ENCODE measurements at regions of chr11 and their contacts with region 1.

Region 1: DNA sequence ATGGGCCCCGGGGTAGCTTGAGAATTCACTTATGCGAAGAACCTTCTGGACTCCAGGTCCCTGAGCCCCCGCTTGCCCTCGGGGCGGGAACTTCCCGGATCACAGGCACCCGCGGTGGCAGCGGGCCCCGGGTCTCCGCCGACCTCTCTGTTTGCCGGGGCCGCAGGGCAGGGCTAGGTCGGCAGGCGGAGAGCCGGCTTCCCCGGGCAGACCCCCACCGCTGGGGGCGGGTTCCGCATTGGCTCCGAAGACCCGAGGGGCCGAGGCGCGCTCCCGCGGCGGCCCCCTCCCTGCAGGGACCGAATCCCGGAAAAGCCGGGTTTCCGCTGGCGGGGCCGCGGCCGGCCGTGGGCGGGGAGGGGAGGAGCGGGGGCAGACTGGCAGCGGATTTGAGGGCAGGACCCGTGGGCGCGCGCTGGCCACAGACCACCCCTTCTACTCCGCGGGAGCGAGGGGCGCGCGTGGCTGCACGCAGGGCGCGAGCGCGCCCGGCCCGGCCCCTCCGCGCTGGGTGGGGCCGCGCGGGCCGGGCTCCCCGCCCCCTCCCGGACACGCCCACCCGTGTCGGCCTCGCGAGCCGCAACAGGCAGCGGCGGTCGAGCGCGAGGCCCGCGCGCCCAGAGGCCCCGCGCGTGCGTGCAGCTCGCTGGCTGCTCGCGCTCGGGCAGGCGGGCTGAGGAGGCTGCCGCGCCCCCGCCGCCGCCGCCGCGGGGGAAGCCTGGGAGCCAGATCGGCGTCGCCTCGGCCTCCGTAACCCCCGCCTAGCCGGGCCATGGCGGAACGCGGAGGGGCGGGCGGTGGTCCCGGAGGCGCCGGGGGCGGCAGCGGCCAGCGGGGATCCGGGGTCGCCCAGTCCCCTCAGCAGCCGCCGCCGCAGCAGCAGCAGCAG is at the start of gene PACS1:
- DNase-seq: peak; percentile 54 to 92 (median 73)
- ATAC-seq: peak; percentile 67
- H3K4me3 ChIP-seq: peak within 1 kb of the TSS; percentile 87
- H3K4me3 Mint-ChIP-seq: peak within 1 kb of the TSS; percentile 96
- H3K27ac ChIP-seq: peak within 1 kb of the TSS; percentile 81 to 85
- H3K27ac Mint-ChIP-seq: peak within 1 kb of the TSS; percentile 94
- H3K4me1 ChIP-seq: peaks cover 41% of the 10 kb centered on the region
- H3K4me1 Mint-ChIP-seq: peaks cover 73% of the 10 kb centered on the region
- H3K27me3 ChIP-seq: no peaks in the 10 kb centered on the region
- H3K27me3 Mint-ChIP-seq: no peaks in the 10 kb centered on the region
- CTCF ChIP-seq: no peak
- total RNA-seq, gene PACS1: 179 to 183 TPM

Region 2: DNA sequence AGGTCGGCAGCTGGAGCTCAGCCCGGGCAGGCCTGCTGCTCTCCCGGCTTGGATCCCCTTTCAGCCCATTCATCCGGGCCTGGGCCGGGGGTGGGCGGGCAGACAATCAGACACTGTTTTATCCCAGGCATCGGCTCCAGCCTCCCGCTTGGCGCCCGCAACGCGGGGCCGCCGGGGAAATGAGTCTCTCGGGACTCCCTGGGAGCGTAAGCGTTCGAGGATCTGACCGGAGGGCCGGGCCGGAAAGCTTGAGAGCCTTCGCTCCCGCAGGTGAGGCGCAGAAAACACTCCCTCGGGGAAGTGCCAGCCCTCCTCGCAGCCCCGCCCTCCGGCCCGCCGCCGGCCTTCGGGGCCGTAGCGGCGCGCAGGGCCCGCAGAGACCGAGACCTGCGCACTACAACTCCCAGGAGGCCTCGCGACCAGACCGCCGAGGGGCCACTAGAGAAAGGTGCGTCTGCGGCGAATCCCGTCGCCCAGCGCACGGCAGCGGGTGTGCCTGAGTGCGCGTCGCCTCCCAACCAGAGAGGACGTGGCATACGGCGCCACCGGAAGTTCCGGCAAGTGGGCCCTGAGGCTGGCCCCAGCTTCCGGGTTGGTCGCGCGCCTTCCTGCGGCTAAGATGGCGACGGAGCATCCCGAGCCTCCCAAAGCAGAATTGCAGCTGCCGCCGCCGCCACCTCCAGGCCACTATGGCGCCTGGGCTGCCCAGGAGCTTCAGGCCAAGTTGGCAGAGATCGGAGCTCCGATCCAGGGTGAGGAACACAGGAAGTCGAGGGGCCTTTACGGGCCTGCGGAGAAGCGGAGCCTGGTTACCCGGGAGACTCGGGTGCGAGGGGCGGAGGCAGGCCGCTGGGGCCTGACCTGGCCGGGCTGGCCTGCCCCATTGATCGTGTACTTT is 17.9 kb before region 1 on chr11 and contains the start of gene SF3B2:
- CTCF ChIA-PET with region 1: interaction called, 8 read pairs
- POLR2A ChIA-PET with region 1: interaction called, 19 read pairs
- intact Hi-C with region 1: loop called (anchors 1 to 2 kb)
- DNase-seq: peak; percentile 88 to 99 (median 94)
- ATAC-seq: peak; percentile 95
- H3K4me3 ChIP-seq: peak within 1 kb of the TSS; percentile 100
- H3K4me3 Mint-ChIP-seq: peak within 1 kb of the TSS; percentile 100
- H3K27ac ChIP-seq: peak within 1 kb of the TSS; percentile 66 to 90
- H3K27ac Mint-ChIP-seq: peak within 1 kb of the TSS; percentile 97
- H3K4me1 ChIP-seq: peaks cover 43% of the 10 kb centered on the region
- H3K4me1 Mint-ChIP-seq: peaks cover 37% of the 10 kb centered on the region
- H3K27me3 ChIP-seq: no peaks in the 10 kb centered on the region
- H3K27me3 Mint-ChIP-seq: peaks cover 5% of the 10 kb centered on the region
- CTCF ChIP-seq: no peak
- total RNA-seq, gene SF3B2: 182 to 196 TPM

Region 3: DNA sequence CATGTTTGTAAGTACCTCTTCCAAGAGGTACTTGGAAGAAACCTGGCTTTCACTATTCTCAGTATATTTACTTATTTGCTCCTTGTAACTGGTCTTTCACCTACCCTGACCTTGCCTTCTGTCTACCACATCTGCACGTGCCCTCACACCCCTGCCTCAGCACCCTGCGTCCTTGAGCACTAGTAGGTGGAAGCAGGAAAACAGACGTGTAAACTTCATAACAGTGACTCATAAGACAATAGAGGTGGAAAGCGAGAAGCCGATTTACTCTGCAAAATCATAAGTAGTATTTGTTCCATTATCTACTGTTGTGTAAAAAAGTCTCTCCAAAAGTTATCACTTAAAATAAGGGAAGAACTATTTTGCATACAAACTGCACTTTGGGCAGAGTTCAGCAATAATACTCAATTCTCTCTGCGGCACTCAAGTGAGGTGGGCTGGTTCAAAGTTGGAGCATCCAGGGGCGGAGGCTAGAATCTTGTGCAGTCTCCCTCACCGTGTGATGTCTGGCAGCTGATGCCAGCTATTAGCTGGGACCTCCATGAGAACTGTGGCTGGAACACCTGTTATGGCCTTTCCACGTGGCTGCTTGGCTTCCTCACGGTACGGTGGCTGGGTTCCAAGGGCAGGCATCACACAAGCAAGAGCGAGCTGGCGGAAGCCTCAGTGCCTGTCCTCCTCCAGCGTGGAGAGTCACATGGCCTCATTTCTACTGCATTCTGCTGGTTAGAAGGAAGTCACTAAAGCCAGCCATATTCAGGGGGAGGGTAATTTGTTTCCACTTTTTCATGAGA is 30.5 kb after region 1 on chr11:
- CTCF ChIA-PET with region 1: interaction called, 13 read pairs
- POLR2A ChIA-PET with region 1: interaction called, 24 read pairs
- intact Hi-C with region 1: loop called (anchors 2 to 5 kb)
- DNase-seq: peak; percentile 45 to 88 (median 66)
- ATAC-seq: peak; percentile 95
- H3K4me3 ChIP-seq: peak overlapping the region; percentile 42
- H3K4me3 Mint-ChIP-seq: peak overlapping the region; percentile 84
- H3K27ac ChIP-seq: peak overlapping the region; percentile 78 to 79
- H3K27ac Mint-ChIP-seq: peak overlapping the region; percentile 89
- H3K4me1 ChIP-seq: peaks cover 69% of the 10 kb centered on the region
- H3K4me1 Mint-ChIP-seq: peaks cover 69% of the 10 kb centered on the region
- H3K27me3 ChIP-seq: no peaks in the 10 kb centered on the region
- H3K27me3 Mint-ChIP-seq: no peaks in the 10 kb centered on the region
- CTCF ChIP-seq: no peak

Region 4: GRCh38 chr11:66119348-66120133 is 49.6 kb after region 1 on chr11:
- CTCF ChIA-PET with region 1: interaction called, 16 read pairs
- POLR2A ChIA-PET with region 1: interaction called, 76 read pairs
- intact Hi-C with region 1: loop called (anchors 2 to 5 kb)
- DNase-seq: no peak
- ATAC-seq: peak; percentile 15
- H3K4me3 ChIP-seq: no peak overlapping the region
- H3K4me3 Mint-ChIP-seq: peak overlapping the region; percentile 62
- H3K27ac ChIP-seq: peak overlapping the region; percentile 16 to 41
- H3K27ac Mint-ChIP-seq: peak overlapping the region; percentile 83
- H3K4me1 ChIP-seq: peaks cover 67% of the 10 kb centered on the region
- H3K4me1 Mint-ChIP-seq: peaks cover 94% of the 10 kb centered on the region
- H3K27me3 ChIP-seq: no peaks in the 10 kb centered on the region
- H3K27me3 Mint-ChIP-seq: no peaks in the 10 kb centered on the region
- CTCF ChIP-seq: no peak

Region 5: GRCh38 chr11:66136752-66137123 is 66.8 kb after region 1 on chr11:
- CTCF ChIA-PET with region 1: interaction called, 28 read pairs
- POLR2A ChIA-PET with region 1: interaction called, 11 read pairs
- intact Hi-C with region 1: loop called (anchors 1 kb)
- DNase-seq: peak in 3 of 14 experiments; percentile 26 to 37 (median 37)
- ATAC-seq: no peak
- H3K4me3 ChIP-seq: no peak overlapping the region
- H3K4me3 Mint-ChIP-seq: no peak overlapping the region
- H3K27ac ChIP-seq: no peak overlapping the region
- H3K27ac Mint-ChIP-seq: peak overlapping the region; percentile 68
- H3K4me1 ChIP-seq: peaks cover 24% of the 10 kb centered on the region
- H3K4me1 Mint-ChIP-seq: peaks cover 59% of the 10 kb centered on the region
- H3K27me3 ChIP-seq: no peaks in the 10 kb centered on the region
- H3K27me3 Mint-ChIP-seq: no peaks in the 10 kb centered on the region
- CTCF ChIP-seq: no peak

Region 6: DNA sequence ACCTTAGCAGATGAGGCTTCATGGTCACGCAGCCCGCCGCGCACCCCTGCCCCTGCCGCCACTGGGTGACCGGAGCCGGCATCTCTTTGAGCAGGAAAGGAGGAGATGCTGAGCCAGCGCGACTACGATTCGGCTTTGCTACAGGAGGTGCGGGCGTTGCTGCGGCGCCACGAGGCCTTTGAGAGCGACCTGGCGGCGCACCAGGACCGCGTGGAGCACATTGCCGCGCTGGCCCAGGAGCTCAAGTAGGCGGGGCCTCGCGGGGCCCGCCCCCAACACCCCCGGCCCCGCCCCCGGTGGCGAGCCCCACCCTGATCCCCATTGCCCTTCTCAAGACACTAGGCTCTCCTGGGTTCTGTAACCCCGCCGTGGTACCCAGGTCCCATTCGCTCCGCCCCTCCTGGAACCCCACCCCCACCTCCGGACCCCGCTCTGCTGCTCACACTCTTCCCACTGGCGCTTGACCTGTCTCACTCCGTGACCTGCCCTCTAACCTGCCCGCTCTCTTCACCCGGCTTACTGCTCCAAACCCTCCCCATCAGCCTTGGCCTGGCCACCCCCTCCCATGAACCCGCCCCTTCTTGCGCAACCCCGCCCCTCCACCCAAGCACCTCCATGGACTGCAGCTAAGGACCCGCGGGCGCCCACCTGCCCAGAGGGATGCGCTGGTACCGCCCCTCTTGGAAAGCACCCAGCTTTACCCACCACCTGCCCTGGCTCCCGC is 489.3 kb after region 1 on chr11:
- CTCF ChIA-PET with region 1: no interaction called
- POLR2A ChIA-PET with region 1: no interaction called
- intact Hi-C with region 1: no loop called
- DNase-seq: peak in 9 of 14 experiments; percentile 7 to 72 (median 43)
- ATAC-seq: peak; percentile 85
- H3K4me3 ChIP-seq: no peak overlapping the region
- H3K4me3 Mint-ChIP-seq: no peak overlapping the region
- H3K27ac ChIP-seq: no peak overlapping the region
- H3K27ac Mint-ChIP-seq: no peak overlapping the region
- H3K4me1 ChIP-seq: peaks cover 9% of the 10 kb centered on the region
- H3K4me1 Mint-ChIP-seq: peaks cover 5% of the 10 kb centered on the region
- H3K27me3 ChIP-seq: peaks cover 8 to 9% of the 10 kb centered on the region in 2 experiments
- H3K27me3 Mint-ChIP-seq: peaks cover 14% of the 10 kb centered on the region
- CTCF ChIP-seq: no peak

Measured in CD4-positive, alpha-beta T cell (primary cell).